Naive thymus-derived CD4-positive, alpha-beta T cell (primary cell): ENCODE measurements at regions of chr3 and their contacts with region 1.

Region 1: DNA sequence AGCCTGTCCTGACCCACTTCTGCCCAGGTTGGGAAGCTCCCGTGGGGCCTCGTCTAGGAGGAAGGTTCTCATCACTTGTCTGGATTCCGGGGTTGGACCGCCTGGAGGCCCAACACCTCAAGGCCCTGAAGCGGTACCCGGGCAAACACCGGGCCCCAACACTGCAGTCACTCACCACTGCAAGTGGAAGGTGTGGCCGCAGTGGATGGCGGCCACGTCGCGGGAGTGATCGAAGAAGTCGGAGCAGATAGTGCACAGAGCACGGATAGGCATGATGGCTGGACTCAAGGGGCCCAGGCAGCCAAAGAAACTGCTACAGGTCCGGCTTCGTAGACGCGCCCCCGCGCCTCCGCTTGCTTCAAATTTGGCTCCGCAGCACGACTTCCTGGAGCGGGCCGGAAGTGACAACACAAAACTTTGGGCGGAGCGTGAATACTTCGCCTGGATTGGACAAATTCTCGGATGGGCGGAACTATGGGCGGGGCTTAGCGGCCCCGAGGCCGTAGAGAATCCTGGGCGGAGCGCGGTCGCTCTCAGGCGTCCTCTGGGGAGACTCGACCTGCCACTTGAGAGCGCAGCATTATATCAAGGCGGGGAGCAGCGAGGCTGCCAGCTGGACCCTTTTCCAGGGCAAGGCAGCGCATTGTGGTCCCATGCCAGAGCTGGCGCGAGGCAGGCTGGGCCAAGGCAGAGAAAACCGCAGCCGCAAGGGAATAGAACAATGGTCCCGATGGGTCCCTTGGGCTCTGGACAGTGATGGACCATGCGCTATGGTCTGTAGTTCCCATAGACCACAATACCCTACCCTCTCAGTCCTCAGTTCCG is at the start of gene TRAIP:
- DNase-seq: peak; percentile 89 to 96 (median 93)
- ATAC-seq: peak; percentile 100
- H3K4me3 ChIP-seq: peak within 1 kb of the TSS; percentile 75
- H3K4me3 Mint-ChIP-seq: peak within 1 kb of the TSS; percentile 80 to 94 (median 88)
- H3K27ac ChIP-seq: peak within 1 kb of the TSS; percentile 71
- H3K27ac Mint-ChIP-seq: peak within 1 kb of the TSS; percentile 70 to 95 (median 92)
- H3K4me1 ChIP-seq: peaks cover 10 to 11% of the 10 kb centered on the region in 2 donors
- H3K4me1 Mint-ChIP-seq: peaks cover 4 to 19% (median 13%) of the 10 kb centered on the region in 7 donors
- H3K27me3 ChIP-seq: no peaks in the 10 kb centered on the region
- H3K27me3 Mint-ChIP-seq: no peaks in the 10 kb centered on the region
- total RNA-seq, gene TRAIP: 4.1 to 22.5 (median 5.7) TPM

Region 2: GRCh38 chr3:49553692-49554632 is 302.4 kb before region 1 on chr3 and contains the start of gene BSN:
- CTCF ChIA-PET with region 1: no interaction called
- POLR2A ChIA-PET with region 1: no interaction called
- intact Hi-C with region 1: loop called in 1 of 2 experiments (anchors 5 kb)
- DNase-seq: peak; percentile 81 to 92 (median 88)
- ATAC-seq: peak; percentile 91
- H3K4me3 ChIP-seq: peak within 1 kb of the TSS; percentile 75
- H3K4me3 Mint-ChIP-seq: peak within 1 kb of the TSS; percentile 80 to 92 (median 86)
- H3K27ac ChIP-seq: peak within 1 kb of the TSS; percentile 37
- H3K27ac Mint-ChIP-seq: peak within 1 kb of the TSS in 8 of 9 donors; percentile 20 to 92 (median 41)
- H3K4me1 ChIP-seq: peaks cover 0 to 20% of the 10 kb centered on the region in 2 donors
- H3K4me1 Mint-ChIP-seq: peaks cover 9 to 20% (median 13%) of the 10 kb centered on the region in 7 donors
- H3K27me3 ChIP-seq: no peaks in the 10 kb centered on the region
- H3K27me3 Mint-ChIP-seq: peaks cover 41 to 56% (median 46%) of the 10 kb centered on the region in 5 donors
- total RNA-seq, gene BSN: 0.12 to 0.16 (median 0.14) TPM

Region 3: DNA sequence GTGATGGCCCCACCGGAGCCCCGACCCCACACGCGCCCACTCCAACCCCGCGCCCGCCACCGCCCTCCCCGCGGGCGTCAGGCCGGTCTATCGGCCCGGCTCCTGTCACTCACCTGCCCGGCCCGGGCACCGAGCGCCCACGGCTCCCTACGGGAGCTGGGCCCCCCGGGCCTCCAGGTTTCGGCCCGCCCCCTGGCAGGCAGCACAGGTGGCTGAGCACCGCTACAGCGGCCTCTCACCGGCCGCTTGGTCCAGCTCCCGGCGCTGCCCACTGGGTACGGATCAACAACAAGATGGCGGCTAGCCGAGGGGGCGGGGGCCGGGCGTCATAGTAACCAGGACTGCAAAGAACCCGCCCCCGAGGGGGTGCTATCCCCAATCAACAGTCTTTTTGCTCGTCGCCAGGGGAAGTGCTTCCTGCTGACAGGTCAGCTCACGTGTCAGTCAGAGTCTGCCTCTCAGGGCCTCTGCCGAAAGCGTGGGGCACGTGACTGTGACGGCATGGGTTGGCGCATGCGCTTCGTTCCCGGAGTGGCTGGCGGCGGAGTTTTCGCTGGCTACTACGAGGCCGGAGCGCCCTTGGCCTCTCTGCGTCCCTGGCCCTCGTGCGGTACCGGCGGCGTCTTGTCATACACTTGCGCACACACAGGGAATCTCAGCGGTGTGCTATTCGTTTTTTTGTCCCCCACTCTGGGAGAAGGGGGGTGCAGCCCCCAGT is 70.0 kb before region 1 on chr3 and contains the start of gene IP6K1:
- CTCF ChIA-PET with region 1: no interaction called
- POLR2A ChIA-PET with region 1: interaction called, 3 read pairs
- intact Hi-C with region 1: loop called in 1 of 2 experiments (anchors 1 kb)
- DNase-seq: peak; percentile 90 to 100 (median 99)
- ATAC-seq: peak; percentile 99
- H3K4me3 ChIP-seq: peak within 1 kb of the TSS; percentile 80
- H3K4me3 Mint-ChIP-seq: peak within 1 kb of the TSS; percentile 91 to 99 (median 94)
- H3K27ac ChIP-seq: peak within 1 kb of the TSS; percentile 95
- H3K27ac Mint-ChIP-seq: peak within 1 kb of the TSS; percentile 96 to 100 (median 99)
- H3K4me1 ChIP-seq: peaks cover 9 to 12% of the 10 kb centered on the region in 2 donors
- H3K4me1 Mint-ChIP-seq: peaks cover 15 to 50% (median 32%) of the 10 kb centered on the region in 7 donors
- H3K27me3 ChIP-seq: no peaks in the 10 kb centered on the region
- H3K27me3 Mint-ChIP-seq: peaks cover 0 to 6% (median 0%) of the 10 kb centered on the region in 5 donors
- total RNA-seq, gene IP6K1: 41.8 to 57.0 (median 47.3) TPM

Region 4: GRCh38 chr3:49929331-49930240 is 73.2 kb after region 1 on chr3 and contains the start of gene MON1A:
- CTCF ChIA-PET with region 1: no interaction called
- POLR2A ChIA-PET with region 1: no interaction called
- intact Hi-C with region 1: loop called (anchors 1 to 2 kb)
- DNase-seq: peak; percentile 65 to 94 (median 74)
- ATAC-seq: peak; percentile 97
- H3K4me3 ChIP-seq: peak within 1 kb of the TSS; percentile 92
- H3K4me3 Mint-ChIP-seq: peak within 1 kb of the TSS; percentile 82 to 90 (median 86)
- H3K27ac ChIP-seq: peak within 1 kb of the TSS; percentile 91
- H3K27ac Mint-ChIP-seq: peak within 1 kb of the TSS; percentile 78 to 92 (median 88)
- H3K4me1 ChIP-seq: peaks cover 6 to 13% of the 10 kb centered on the region in 2 donors
- H3K4me1 Mint-ChIP-seq: peaks cover 6 to 36% (median 31%) of the 10 kb centered on the region in 7 donors
- H3K27me3 ChIP-seq: no peaks in the 10 kb centered on the region
- H3K27me3 Mint-ChIP-seq: no peaks in the 10 kb centered on the region
- total RNA-seq, gene MON1A: 4.6 to 12.6 (median 8.6) TPM

Region 5: DNA sequence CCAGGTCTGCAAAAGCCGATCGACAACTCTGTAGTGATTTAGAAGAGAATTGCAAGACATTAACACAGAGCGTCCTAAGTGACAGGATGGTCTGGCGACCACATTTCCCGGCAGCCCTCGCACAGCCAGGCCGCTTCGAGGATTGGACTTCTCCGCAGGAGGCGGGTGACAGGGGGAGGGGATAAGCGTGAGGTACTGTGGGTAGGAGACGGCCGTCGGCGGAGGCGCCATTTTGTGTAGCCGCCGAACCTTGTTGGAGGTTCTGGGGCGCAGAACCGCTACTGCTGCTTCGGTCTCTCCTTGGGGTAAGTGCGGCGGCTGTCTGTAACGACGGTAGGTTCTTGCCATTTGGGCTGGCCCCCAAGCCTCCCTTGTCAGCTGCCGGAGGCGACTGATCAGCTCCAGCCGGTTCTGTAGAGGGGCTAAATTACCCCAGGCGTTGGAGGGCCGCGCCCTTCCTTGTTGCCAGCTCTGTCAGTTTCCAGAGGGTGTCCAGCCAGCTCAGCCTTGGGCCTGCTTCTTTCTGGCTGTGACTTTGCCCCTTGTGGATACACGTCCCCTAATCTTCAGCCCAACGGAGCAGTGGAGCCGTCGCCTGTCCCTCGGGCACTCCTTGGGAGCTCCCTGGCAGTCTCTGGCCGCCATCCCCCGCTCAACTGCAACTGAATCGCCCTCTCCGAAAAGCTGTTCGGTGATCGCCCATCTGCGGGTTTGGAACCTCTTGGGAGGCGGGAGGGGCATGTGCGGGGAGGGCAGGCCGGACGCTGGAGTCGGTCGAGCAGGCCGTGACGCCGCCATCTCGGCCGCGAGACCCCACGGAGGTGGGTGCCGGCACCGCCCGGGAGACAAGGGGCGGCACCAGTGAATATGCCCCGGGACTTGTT is 232.6 kb after region 1 on chr3 and contains the start of gene RBM5:
- CTCF ChIA-PET with region 1: no interaction called
- POLR2A ChIA-PET with region 1: no interaction called
- intact Hi-C with region 1: loop called (anchors 2 kb)
- DNase-seq: peak; percentile 71 to 91 (median 89)
- ATAC-seq: peak; percentile 100
- H3K4me3 ChIP-seq: peak within 1 kb of the TSS; percentile 88
- H3K4me3 Mint-ChIP-seq: peak within 1 kb of the TSS; percentile 94 to 98 (median 96)
- H3K27ac ChIP-seq: peak within 1 kb of the TSS; percentile 98
- H3K27ac Mint-ChIP-seq: peak within 1 kb of the TSS; percentile 94 to 99 (median 97)
- H3K4me1 ChIP-seq: peaks cover 16 to 23% of the 10 kb centered on the region in 2 donors
- H3K4me1 Mint-ChIP-seq: peaks cover 24 to 36% (median 32%) of the 10 kb centered on the region in 7 donors
- H3K27me3 ChIP-seq: no peaks in the 10 kb centered on the region
- H3K27me3 Mint-ChIP-seq: no peaks in the 10 kb centered on the region
- total RNA-seq, gene RBM5: 223 to 420 (median 342) TPM